ENCODE measurements at regions of chr5 and their contacts with region 1.

Region 1: GRCh38 chr5:157148734-157149615 is 6.3 kb upstream of the MED7 start:
- DNase-seq: peak; percentile 68 to 91 (median 85)
- ATAC-seq: peak; percentile 86
- H3K4me3 ChIP-seq: no peak overlapping the region
- H3K4me3 Mint-ChIP-seq: no peak overlapping the region
- H3K27ac ChIP-seq: no peak overlapping the region
- H3K27ac Mint-ChIP-seq: peak overlapping the region; percentile 76
- H3K4me1 ChIP-seq: peaks cover 33% of the 10 kb centered on the region
- H3K4me1 Mint-ChIP-seq: peaks cover 37% of the 10 kb centered on the region
- H3K27me3 ChIP-seq: no peaks in the 10 kb centered on the region
- H3K27me3 Mint-ChIP-seq: no peaks in the 10 kb centered on the region
- CTCF ChIP-seq: peak; percentile 82

Region 2: GRCh38 chr5:157108976-157109375 is 40.0 kb before region 1 on chr5 and contains the start of gene HAVCR2:
- CTCF ChIA-PET with region 1: no interaction called
- POLR2A ChIA-PET with region 1: no interaction called
- intact Hi-C with region 1: no loop called
- DNase-seq: peak; percentile 24 to 74 (median 54)
- ATAC-seq: peak; percentile 94
- H3K4me3 ChIP-seq: peak within 1 kb of the TSS; percentile 26 to 39
- H3K4me3 Mint-ChIP-seq: peak within 1 kb of the TSS; percentile 84
- H3K27ac ChIP-seq: peak within 1 kb of the TSS; percentile 26 to 70
- H3K27ac Mint-ChIP-seq: peak within 1 kb of the TSS; percentile 95
- H3K4me1 ChIP-seq: peaks cover 22% of the 10 kb centered on the region
- H3K4me1 Mint-ChIP-seq: peaks cover 43% of the 10 kb centered on the region
- H3K27me3 ChIP-seq: no peaks in the 10 kb centered on the region
- H3K27me3 Mint-ChIP-seq: no peaks in the 10 kb centered on the region
- CTCF ChIP-seq: no peak
- total RNA-seq, gene HAVCR2: 1.6 to 3.8 TPM

Region 3: GRCh38 chr5:157159209-157159751 is 10.3 kb after region 1 on chr5:
- CTCF ChIA-PET with region 1: interaction called, 15 read pairs
- POLR2A ChIA-PET with region 1: no interaction called
- intact Hi-C with region 1: no loop called
- DNase-seq: peak in 6 of 9 experiments; percentile 29 to 72 (median 53)
- ATAC-seq: peak; percentile 81
- H3K4me3 ChIP-seq: no peak overlapping the region
- H3K4me3 Mint-ChIP-seq: peak overlapping the region; percentile 13
- H3K27ac ChIP-seq: peak overlapping the region; percentile 23 to 78
- H3K27ac Mint-ChIP-seq: peak overlapping the region; percentile 58
- H3K4me1 ChIP-seq: peaks cover 38% of the 10 kb centered on the region
- H3K4me1 Mint-ChIP-seq: peaks cover 62% of the 10 kb centered on the region
- H3K27me3 ChIP-seq: no peaks in the 10 kb centered on the region
- H3K27me3 Mint-ChIP-seq: no peaks in the 10 kb centered on the region
- CTCF ChIP-seq: no peak

Region 4: DNA sequence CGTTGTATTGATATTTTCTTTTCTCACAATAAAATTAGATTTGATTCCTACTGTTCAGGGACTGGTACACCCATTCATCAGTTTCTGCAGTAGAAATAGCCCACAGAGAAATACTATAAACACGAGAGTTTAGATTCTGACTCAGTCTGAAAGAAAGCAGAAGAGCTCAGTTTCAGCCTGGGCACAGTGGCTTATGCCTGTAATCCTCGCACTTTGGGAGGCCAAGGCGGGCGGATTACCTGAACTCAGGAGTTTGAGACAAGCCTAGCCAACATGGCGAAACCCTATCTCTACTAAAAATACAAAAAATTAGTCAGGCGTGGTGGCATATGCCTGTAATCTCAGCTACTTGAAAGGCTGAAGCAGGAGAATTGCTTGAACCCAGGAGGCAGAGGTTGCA is 40.2 kb after region 1 on chr5:
- CTCF ChIA-PET with region 1: interaction called, 21 read pairs
- POLR2A ChIA-PET with region 1: interaction called, 33 read pairs
- intact Hi-C with region 1: loop called in 1 of 2 experiments (anchors 2 kb)
- DNase-seq: no peak
- ATAC-seq: no peak
- H3K4me3 ChIP-seq: peak overlapping the region; percentile 18 to 40
- H3K4me3 Mint-ChIP-seq: peak overlapping the region; percentile 85
- H3K27ac ChIP-seq: peak overlapping the region; percentile 34 to 83
- H3K27ac Mint-ChIP-seq: peak overlapping the region; percentile 93
- H3K4me1 ChIP-seq: peaks cover 86% of the 10 kb centered on the region
- H3K4me1 Mint-ChIP-seq: peaks cover 86% of the 10 kb centered on the region
- H3K27me3 ChIP-seq: no peaks in the 10 kb centered on the region
- H3K27me3 Mint-ChIP-seq: no peaks in the 10 kb centered on the region
- CTCF ChIP-seq: no peak

Region 5: DNA sequence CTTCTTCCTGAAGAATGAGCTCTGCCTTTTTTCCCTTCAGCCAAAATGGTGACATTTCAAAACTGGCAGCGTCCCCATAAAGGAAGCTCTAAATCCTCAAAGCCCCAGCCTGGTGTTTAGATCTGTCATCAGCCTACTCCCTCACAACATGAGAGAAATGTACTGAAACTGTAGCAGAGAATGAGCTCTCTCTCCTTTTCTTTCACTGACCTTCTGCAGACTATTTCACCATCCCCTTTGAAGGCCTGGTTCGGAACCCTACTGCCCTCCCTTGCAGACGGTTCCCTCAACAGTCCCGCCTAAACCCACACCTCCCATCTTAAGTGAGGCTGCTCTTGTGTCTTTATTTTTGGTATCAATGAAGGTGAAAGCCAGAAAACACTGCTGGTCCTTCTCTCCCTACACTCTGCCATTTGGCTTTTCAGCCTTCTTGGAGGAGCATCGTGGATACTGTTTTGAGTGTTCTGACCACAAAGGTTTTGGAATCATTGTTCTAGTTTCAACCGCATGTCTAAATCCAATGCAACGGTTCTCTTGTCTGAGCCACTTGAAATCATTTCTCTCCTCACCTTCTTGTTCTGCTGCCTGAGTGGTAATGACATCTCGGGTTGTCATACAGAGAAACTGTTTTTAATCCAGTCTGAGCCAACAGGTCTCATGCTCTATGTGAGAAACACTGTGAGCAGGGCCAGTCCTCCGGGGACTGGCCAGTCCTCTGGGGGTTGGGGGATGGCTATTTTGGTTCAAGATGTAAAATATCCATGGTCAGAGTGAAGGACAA is 70.7 kb after region 1 on chr5:
- CTCF ChIA-PET with region 1: interaction called, 18 read pairs
- POLR2A ChIA-PET with region 1: interaction called, 19 read pairs
- intact Hi-C with region 1: loop called (anchors 1 to 5 kb)
- DNase-seq: no peak
- ATAC-seq: no peak
- H3K4me3 ChIP-seq: no peak overlapping the region
- H3K4me3 Mint-ChIP-seq: peak overlapping the region; percentile 40
- H3K27ac ChIP-seq: peak overlapping the region in 1 of 2 experiments; percentile 76
- H3K27ac Mint-ChIP-seq: peak overlapping the region; percentile 91
- H3K4me1 ChIP-seq: peaks cover 85% of the 10 kb centered on the region
- H3K4me1 Mint-ChIP-seq: peaks cover 87% of the 10 kb centered on the region
- H3K27me3 ChIP-seq: no peaks in the 10 kb centered on the region
- H3K27me3 Mint-ChIP-seq: no peaks in the 10 kb centered on the region
- CTCF ChIP-seq: no peak

Region 6: GRCh38 chr5:157253547-157253946 is 104.6 kb after region 1 on chr5:
- CTCF ChIA-PET with region 1: interaction called, 28 read pairs
- POLR2A ChIA-PET with region 1: interaction called, 7 read pairs
- intact Hi-C with region 1: loop called in 1 of 2 experiments (anchors 1 kb)
- DNase-seq: peak in 1 of 9 experiments; percentile 29
- ATAC-seq: no peak
- H3K4me3 ChIP-seq: no peak overlapping the region
- H3K4me3 Mint-ChIP-seq: peak overlapping the region; percentile 61
- H3K27ac ChIP-seq: peak overlapping the region; percentile 61 to 72
- H3K27ac Mint-ChIP-seq: peak overlapping the region; percentile 92
- H3K4me1 ChIP-seq: peaks cover 97% of the 10 kb centered on the region
- H3K4me1 Mint-ChIP-seq: peaks cover 93% of the 10 kb centered on the region
- H3K27me3 ChIP-seq: no peaks in the 10 kb centered on the region
- H3K27me3 Mint-ChIP-seq: no peaks in the 10 kb centered on the region
- CTCF ChIP-seq: peak; percentile 54

Region 7: GRCh38 chr5:157312492-157312891 is 163.5 kb after region 1 on chr5:
- CTCF ChIA-PET with region 1: interaction called, 26 read pairs
- POLR2A ChIA-PET with region 1: interaction called, 5 read pairs
- intact Hi-C with region 1: loop called (anchors 1 kb)
- DNase-seq: peak; percentile 24 to 87 (median 66)
- ATAC-seq: peak; percentile 95
- H3K4me3 ChIP-seq: no peak overlapping the region
- H3K4me3 Mint-ChIP-seq: no peak overlapping the region
- H3K27ac ChIP-seq: peak overlapping the region in 1 of 2 experiments; percentile 11
- H3K27ac Mint-ChIP-seq: peak overlapping the region; percentile 81
- H3K4me1 ChIP-seq: peaks cover 37% of the 10 kb centered on the region
- H3K4me1 Mint-ChIP-seq: peaks cover 38% of the 10 kb centered on the region
- H3K27me3 ChIP-seq: no peaks in the 10 kb centered on the region
- H3K27me3 Mint-ChIP-seq: no peaks in the 10 kb centered on the region
- CTCF ChIP-seq: peak; percentile 62